PC-3 (cell line): ENCODE measurements at regions of chr12 and their contacts with region 1.

Region 1: GRCh38 chr12:68223083-68223747 is 2.4 kb downstream of the IL26 start:
- DNase-seq: peak; percentile 89
- ATAC-seq: peak; percentile 88
- H3K4me3 ChIP-seq: peak overlapping the region; percentile 57
- H3K27ac ChIP-seq: no peak overlapping the region
- H3K4me1 ChIP-seq: peaks cover 25% of the 10 kb centered on the region
- H3K27me3 ChIP-seq: peaks cover 10% of the 10 kb centered on the region
- CTCF ChIP-seq: peak; percentile 91

Region 2: GRCh38 chr12:68259318-68259940 is 36.2 kb after region 1 on chr12:
- CTCF ChIA-PET with region 1: interaction called, 3 read pairs
- POLR2A ChIA-PET with region 1: no interaction called
- intact Hi-C with region 1: loop called (anchors 1 kb)
- DNase-seq: peak; percentile 89
- ATAC-seq: peak; percentile 96
- H3K4me3 ChIP-seq: peak overlapping the region; percentile 47
- H3K27ac ChIP-seq: peak overlapping the region; percentile 96
- H3K4me1 ChIP-seq: peaks cover 22% of the 10 kb centered on the region
- H3K27me3 ChIP-seq: no peaks in the 10 kb centered on the region
- CTCF ChIP-seq: peak; percentile 38; the same call in 1 of the 2 replicates

Region 3: GRCh38 chr12:68317047-68317667 is 93.9 kb after region 1 on chr12:
- CTCF ChIA-PET with region 1: interaction called, 5 read pairs
- POLR2A ChIA-PET with region 1: no interaction called
- intact Hi-C with region 1: loop called (anchors 1 kb)
- DNase-seq: peak; percentile 65
- ATAC-seq: no peak
- H3K4me3 ChIP-seq: no peak overlapping the region
- H3K27ac ChIP-seq: no peak overlapping the region
- H3K4me1 ChIP-seq: no peaks in the 10 kb centered on the region
- H3K27me3 ChIP-seq: no peaks in the 10 kb centered on the region
- CTCF ChIP-seq: peak; percentile 76

Region 4: DNA sequence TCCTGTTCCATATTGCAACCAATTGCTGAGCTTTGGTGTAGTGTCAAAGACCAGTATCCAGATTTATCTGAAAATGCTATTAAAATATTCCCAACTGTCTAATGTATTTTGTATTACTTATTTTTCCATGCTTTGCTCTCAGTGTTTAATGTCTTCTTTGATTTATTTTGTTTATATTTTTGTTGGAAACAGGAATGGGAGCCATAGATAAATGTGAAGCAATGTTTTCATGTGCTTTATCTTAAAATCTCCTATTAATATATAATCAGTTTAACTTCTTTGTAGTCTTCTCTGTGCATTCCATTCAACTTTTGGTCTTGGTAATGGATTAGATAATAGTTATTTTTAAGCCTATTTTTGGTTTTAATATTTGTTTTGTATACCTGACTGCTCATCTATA is 396.3 kb after region 1 on chr12:
- CTCF ChIA-PET with region 1: no interaction called
- POLR2A ChIA-PET with region 1: interaction called, 24 read pairs
- intact Hi-C with region 1: no loop called
- DNase-seq: no peak
- ATAC-seq: no peak
- H3K4me3 ChIP-seq: no peak overlapping the region
- H3K27ac ChIP-seq: no peak overlapping the region
- H3K4me1 ChIP-seq: peaks cover 19% of the 10 kb centered on the region
- H3K27me3 ChIP-seq: no peaks in the 10 kb centered on the region
- CTCF ChIP-seq: no peak

Region 5: GRCh38 chr12:68675101-68675842 is 452.1 kb after region 1 on chr12:
- CTCF ChIA-PET with region 1: no interaction called
- POLR2A ChIA-PET with region 1: no interaction called
- intact Hi-C with region 1: loop called (anchors 10 kb)
- DNase-seq: no peak
- ATAC-seq: no peak
- H3K4me3 ChIP-seq: no peak overlapping the region
- H3K27ac ChIP-seq: no peak overlapping the region
- H3K4me1 ChIP-seq: peaks cover 10% of the 10 kb centered on the region; the same call in 1 of the 2 replicates
- H3K27me3 ChIP-seq: no peaks in the 10 kb centered on the region
- CTCF ChIP-seq: no peak